ENCODE measurements at regions of chr14 and their contacts with region 1.

Region 1: GRCh38 chr14:59275653-59276052 is 87.2 kb downstream of the DAAM1 start:
- DNase-seq: peak in 1 of 2 experiments; percentile 90
- H3K4me3 ChIP-seq: no peak overlapping the region
- H3K27ac ChIP-seq: peak overlapping the region; percentile 73
- H3K4me1 ChIP-seq: peaks cover 59% of the 10 kb centered on the region
- H3K27me3 ChIP-seq: no peaks in the 10 kb centered on the region
- CTCF ChIP-seq: no peak

Region 2: GRCh38 chr14:59189786-59190771 is 85.6 kb before region 1 on chr14:
- CTCF ChIA-PET with region 1: interaction called, 3 read pairs
- POLR2A ChIA-PET with region 1: interaction called, 3 read pairs
- intact Hi-C with region 1: loop called (anchors 1 kb)
- DNase-seq: peak; percentile 78 to 79
- H3K4me3 ChIP-seq: peak overlapping the region; percentile 90
- H3K27ac ChIP-seq: no peak overlapping the region
- H3K4me1 ChIP-seq: peaks cover 29% of the 10 kb centered on the region
- H3K27me3 ChIP-seq: no peaks in the 10 kb centered on the region
- CTCF ChIP-seq: no peak; the same call in 1 of the 2 replicates

Region 3: DNA sequence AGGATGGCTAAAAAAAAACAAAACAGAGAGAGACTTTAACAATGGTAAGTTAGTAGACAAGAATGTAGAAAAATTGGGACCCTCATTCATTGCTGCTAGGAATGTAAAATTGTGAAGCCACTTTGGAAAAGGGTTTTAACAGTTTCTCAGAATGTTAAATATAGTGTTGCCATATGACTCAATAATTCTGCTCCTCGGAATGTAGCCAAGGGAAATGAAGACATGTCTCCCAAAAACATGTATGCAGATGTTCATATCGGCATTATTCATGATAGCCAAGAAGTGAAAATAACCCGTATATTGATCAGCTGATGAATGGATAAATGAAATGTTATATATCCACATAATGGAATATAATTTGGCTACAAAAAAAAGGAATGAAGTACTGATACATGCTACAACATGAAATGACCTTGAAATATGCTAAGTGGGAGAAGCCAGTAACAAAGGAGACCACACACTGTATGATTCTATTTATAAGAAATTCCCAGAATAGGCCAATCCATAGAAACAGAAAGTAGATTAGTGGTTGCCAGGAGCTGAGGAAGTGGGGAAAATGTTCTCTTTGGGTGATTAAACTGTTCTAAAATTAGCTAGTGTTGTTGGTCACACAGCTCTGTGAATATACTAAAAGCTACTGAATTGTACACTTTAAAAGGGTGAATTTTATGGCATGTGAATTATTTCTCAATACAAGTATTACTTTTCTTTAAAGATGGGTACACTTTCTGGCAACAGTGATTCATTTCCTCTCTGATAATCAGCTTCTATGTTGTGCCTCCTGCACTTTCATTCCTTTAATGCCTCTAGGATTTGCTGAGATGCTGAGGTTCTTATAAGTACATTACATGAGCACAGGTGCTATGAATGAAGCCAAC is 45.3 kb after region 1 on chr14:
- CTCF ChIA-PET with region 1: no interaction called
- POLR2A ChIA-PET with region 1: no interaction called
- intact Hi-C with region 1: loop called (anchors 5 kb)
- DNase-seq: peak in 1 of 2 experiments; percentile 94
- H3K4me3 ChIP-seq: 0 out of 2 replicates have a peak overlapping the region, but pooled peaks have one; percentile 2
- H3K27ac ChIP-seq: peak overlapping the region; percentile 71
- H3K4me1 ChIP-seq: peaks cover 29% of the 10 kb centered on the region
- H3K27me3 ChIP-seq: no peaks in the 10 kb centered on the region
- CTCF ChIP-seq: no peak

Region 4: GRCh38 chr14:59360923-59361794 is 85.5 kb after region 1 on chr14:
- CTCF ChIA-PET with region 1: no interaction called
- POLR2A ChIA-PET with region 1: interaction called, 4 read pairs
- intact Hi-C with region 1: loop called (anchors 1 kb)
- DNase-seq: peak; percentile 88 to 99
- H3K4me3 ChIP-seq: peak overlapping the region; percentile 33; the same call in 1 of the 2 replicates
- H3K27ac ChIP-seq: peak overlapping the region; percentile 86
- H3K4me1 ChIP-seq: peaks cover 100% of the 10 kb centered on the region
- H3K27me3 ChIP-seq: no peaks in the 10 kb centered on the region
- CTCF ChIP-seq: no peak

Region 5: DNA sequence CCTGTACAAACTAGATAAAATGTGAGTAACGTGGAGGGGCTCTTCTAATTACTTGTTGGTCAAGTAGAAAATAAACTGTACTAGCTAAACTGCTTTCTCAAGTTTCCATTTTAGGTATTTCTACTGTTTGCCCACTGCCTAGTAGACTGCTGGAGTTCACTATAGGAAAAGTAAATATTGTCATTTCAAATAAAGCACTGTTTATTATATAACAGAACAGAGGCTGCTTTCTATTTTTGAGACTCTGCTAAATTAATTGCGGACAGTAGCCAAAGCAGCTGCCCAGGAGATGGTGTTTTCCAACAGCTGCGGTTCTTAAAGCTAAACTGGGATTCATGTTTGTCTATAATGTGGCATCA is 1389.5 kb after region 1 on chr14:
- CTCF ChIA-PET with region 1: interaction called, 12 read pairs
- POLR2A ChIA-PET with region 1: no interaction called
- intact Hi-C with region 1: no loop called
- DNase-seq: no peak
- H3K4me3 ChIP-seq: no peak overlapping the region
- H3K27ac ChIP-seq: no peak overlapping the region
- H3K4me1 ChIP-seq: peaks cover 6% of the 10 kb centered on the region; the same call in 1 of the 2 replicates
- H3K27me3 ChIP-seq: no peaks in the 10 kb centered on the region
- CTCF ChIP-seq: no peak

Measured in PC-9 (cell line).